ENCODE measurements at regions of chr16 and their contacts with region 1.

Region 1: GRCh38 chr16:2942045-2942444 is 22.0 kb upstream of the KREMEN2 start:
- DNase-seq: no peak

Region 2: GRCh38 chr16:2969545-2970521 is 27.8 kb after region 1 on chr16:
- intact Hi-C with region 1: no loop called
- DNase-seq: no peak

Region 3: GRCh38 chr16:2983706-2984136 is 41.7 kb after region 1 on chr16:
- intact Hi-C with region 1: loop called in 1 of 2 experiments (anchors 2 kb)
- DNase-seq: peak; percentile 94